HAP-1 (cell line): ENCODE measurements at regions of chr3 and their contacts with region 1.

Region 1: DNA sequence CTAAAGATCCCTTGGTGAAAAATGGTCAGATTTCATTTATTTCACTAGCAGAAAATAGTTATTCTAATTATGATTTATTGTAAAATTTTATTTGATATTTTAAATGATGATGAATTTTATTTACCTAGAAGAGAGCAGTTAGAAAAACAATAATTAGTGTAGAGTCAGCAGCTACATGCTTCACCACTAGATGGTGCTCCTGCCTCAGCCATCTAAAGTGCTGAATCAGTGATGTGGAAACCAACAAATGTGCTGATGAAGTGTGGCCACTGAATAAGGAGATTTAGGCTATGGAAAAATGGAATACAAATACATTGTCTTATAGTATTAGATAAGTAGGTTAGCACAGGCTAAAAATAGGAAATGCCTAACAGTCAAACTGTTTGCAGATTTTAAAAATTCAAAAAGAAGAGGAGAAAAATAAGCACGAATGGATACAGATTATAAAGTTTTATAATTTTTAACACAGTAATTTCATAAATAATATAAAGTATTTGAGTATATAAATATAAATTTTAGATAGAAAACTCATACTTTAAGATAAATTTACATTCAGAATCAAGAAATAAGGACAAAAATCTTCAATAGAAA is 109.8 kb downstream of the PPP2R3A start:
- DNase-seq: peak; percentile 77 to 79
- H3K4me3 ChIP-seq: no peak overlapping the region
- H3K4me1 ChIP-seq: 0 out of 2 replicates have a peak, but pooled peaks cover 4% of the 10 kb centered on the region
- H3K27me3 ChIP-seq: no peaks in the 10 kb centered on the region

Region 2: DNA sequence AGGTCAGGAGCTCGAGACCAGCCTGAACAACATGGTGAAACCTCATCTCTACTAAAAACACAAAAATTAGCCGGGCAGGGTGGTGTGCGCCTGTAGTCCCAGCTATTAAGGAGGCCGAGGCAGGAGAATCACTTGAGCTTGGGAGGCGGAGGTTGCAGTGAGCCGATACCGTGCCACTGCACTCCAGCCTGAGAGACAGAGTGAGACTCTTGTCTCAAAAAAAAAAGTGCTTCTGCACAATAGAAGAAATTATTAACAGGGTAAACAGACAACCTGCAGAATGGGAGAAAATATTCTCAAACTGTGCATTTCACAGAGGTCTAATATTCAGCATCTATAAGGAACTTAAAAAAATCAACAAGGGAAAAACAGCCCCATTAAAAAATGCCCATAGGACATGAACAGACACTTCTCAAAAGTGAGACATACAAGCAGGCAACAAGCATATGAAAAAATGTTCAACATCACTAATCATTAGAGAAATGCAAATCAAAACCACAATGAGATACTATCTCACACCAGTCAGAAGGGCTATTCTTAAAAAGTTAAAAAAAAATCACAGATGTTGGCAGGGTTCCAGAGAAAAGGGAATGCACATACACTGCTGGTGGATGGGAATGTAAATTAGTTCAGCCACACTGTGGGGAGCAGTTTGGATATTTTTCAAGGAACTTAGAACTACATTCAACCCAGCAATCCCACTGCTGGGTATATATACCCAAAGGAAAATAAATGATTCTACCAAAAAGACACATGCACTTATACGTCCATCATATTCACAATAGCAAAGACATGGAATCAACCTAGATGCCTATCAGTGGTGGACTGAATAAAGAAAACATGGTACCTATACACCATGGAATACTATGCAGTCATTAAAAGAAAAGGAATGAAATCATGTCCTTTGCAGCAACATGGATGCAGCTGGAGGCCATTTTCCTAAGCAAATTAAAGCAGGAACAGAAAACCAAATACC is 45.3 kb after region 1 on chr3:
- in situ Hi-C with region 1: no loop called
- DNase-seq: peak in 1 of 2 experiments; percentile 27
- H3K4me3 ChIP-seq: no peak overlapping the region
- H3K4me1 ChIP-seq: peaks cover 4% of the 10 kb centered on the region
- H3K27me3 ChIP-seq: no peaks in the 10 kb centered on the region

Region 3: GRCh38 chr3:136305878-136306277 is 230.6 kb after region 1 on chr3:
- in situ Hi-C with region 1: loop called (anchors 25 kb)
- DNase-seq: peak; percentile 17 to 55
- H3K4me3 ChIP-seq: no peak overlapping the region
- H3K4me1 ChIP-seq: no peaks in the 10 kb centered on the region
- H3K27me3 ChIP-seq: no peaks in the 10 kb centered on the region